ENCODE measurements at regions of chr3 and their contacts with region 1.

Region 1: DNA sequence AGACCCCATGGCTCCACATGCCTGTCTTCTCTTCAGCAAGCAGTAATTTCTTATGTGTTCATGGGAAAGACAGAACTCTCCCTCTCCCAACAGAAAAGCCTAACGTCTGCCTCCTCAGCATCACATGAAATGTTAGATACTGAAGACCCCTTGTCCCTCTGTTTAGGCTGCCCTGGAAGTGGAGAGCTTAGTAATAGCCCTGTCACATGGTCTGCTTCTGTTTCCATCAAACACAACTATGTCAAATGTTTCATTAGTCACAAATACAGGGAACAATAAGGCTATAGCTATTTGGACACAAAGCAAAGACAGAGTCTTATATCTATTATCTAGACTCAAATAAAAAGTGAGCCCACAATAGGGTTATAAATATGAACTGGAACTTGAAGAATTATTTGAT is 190.3 kb upstream of the TRIM42 start:
- DNase-seq: no peak
- H3K4me3 ChIP-seq: no peak overlapping the region
- H3K27ac ChIP-seq: no peak overlapping the region
- H3K4me1 ChIP-seq: no peaks in the 10 kb centered on the region
- H3K27me3 ChIP-seq: no peaks in the 10 kb centered on the region
- CTCF ChIP-seq: no peak

Region 2: GRCh38 chr3:140610544-140610943 is 123.0 kb after region 1 on chr3:
- intact Hi-C with region 1: loop called (anchors 5 kb)
- DNase-seq: no peak
- H3K4me3 ChIP-seq: no peak overlapping the region
- H3K27ac ChIP-seq: no peak overlapping the region
- H3K4me1 ChIP-seq: no peaks in the 10 kb centered on the region
- H3K27me3 ChIP-seq: no peaks in the 10 kb centered on the region
- CTCF ChIP-seq: no peak

Measured in left ventricle myocardium inferior (tissue), 1 donor.